CD8-positive, alpha-beta T cell (primary cell): ENCODE measurements at regions of chr4 and their contacts with region 1.

Region 1: DNA sequence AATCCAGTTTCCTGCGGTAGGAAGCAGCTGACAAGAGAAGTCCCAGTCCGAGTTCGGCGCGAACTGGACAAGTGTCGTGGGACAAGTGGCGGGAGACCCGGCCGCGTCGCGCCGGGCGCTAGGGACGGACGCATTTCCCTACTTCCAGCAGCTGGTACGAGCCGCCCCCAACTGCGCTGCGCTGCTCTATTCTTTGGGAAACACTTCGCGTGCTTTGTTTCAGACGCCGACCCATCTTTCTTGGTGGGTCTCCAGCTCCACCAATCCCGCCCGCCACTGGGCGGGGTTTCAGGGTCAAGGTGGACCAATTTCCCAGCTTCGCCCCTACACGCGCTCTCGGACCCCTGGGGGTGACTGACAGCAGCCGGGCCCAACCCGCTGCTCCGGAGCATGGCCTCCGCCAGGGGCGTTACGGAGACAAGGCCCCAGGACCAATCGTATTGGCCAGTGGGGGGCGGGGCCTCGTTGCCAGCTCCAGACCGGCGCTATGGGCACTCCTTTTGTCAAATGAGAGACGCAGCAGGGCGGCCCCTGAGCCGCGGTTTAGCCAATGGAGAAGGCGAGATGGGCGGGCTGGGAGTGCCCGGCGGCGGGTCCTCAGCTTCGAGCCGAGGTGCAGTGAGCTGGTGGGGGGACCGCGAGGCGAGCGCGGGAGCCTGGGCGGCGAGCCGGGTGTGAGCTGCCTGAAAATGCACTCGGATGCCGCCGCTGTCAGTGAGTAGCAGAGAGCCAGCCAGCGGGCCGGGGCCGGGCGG is at the start of gene DCUN1D4:
- DNase-seq: peak; percentile 96 to 99 (median 98)
- ATAC-seq: peak; percentile 81
- H3K4me3 ChIP-seq: peak within 1 kb of the TSS; percentile 73 to 97
- H3K4me3 Mint-ChIP-seq: peak within 1 kb of the TSS; percentile 95
- H3K27ac ChIP-seq: peak within 1 kb of the TSS; percentile 68 to 73
- H3K27ac Mint-ChIP-seq: peak within 1 kb of the TSS; percentile 92
- H3K4me1 ChIP-seq: peaks cover 4% of the 10 kb centered on the region
- H3K4me1 Mint-ChIP-seq: peaks cover 20% of the 10 kb centered on the region
- H3K27me3 ChIP-seq: no peaks in the 10 kb centered on the region
- H3K27me3 Mint-ChIP-seq: no peaks in the 10 kb centered on the region
- CTCF ChIP-seq: no peak
- total RNA-seq, gene DCUN1D4: 29.3 to 32.4 TPM

Region 2: GRCh38 chr4:51895813-51896408 is 53.2 kb after region 1 on chr4:
- CTCF ChIA-PET with region 1: interaction called, 5 read pairs
- POLR2A ChIA-PET with region 1: no interaction called
- intact Hi-C with region 1: loop called in 1 of 2 experiments (anchors 5 kb)
- DNase-seq: peak; percentile 1 to 70 (median 42)
- ATAC-seq: peak; percentile 80
- H3K4me3 ChIP-seq: no peak overlapping the region
- H3K4me3 Mint-ChIP-seq: no peak overlapping the region
- H3K27ac ChIP-seq: no peak overlapping the region
- H3K27ac Mint-ChIP-seq: no peak overlapping the region
- H3K4me1 ChIP-seq: no peaks in the 10 kb centered on the region
- H3K4me1 Mint-ChIP-seq: peaks cover 5% of the 10 kb centered on the region
- H3K27me3 ChIP-seq: no peaks in the 10 kb centered on the region
- H3K27me3 Mint-ChIP-seq: no peaks in the 10 kb centered on the region
- CTCF ChIP-seq: peak; percentile 67

Region 3: GRCh38 chr4:52659001-52659721 is 816.4 kb after region 1 on chr4 and contains the start of gene USP46:
- CTCF ChIA-PET with region 1: no interaction called
- POLR2A ChIA-PET with region 1: no interaction called
- intact Hi-C with region 1: loop called in 1 of 2 experiments (anchors 5 kb)
- DNase-seq: peak in 8 of 9 experiments; percentile 25 to 70 (median 42)
- ATAC-seq: peak; percentile 77
- H3K4me3 ChIP-seq: peak within 1 kb of the TSS; percentile 66 to 67
- H3K4me3 Mint-ChIP-seq: peak within 1 kb of the TSS; percentile 82
- H3K27ac ChIP-seq: peak within 1 kb of the TSS in 1 of 2 experiments; percentile 22
- H3K27ac Mint-ChIP-seq: peak within 1 kb of the TSS; percentile 76
- H3K4me1 ChIP-seq: no peaks in the 10 kb centered on the region
- H3K4me1 Mint-ChIP-seq: peaks cover 21% of the 10 kb centered on the region
- H3K27me3 ChIP-seq: no peaks in the 10 kb centered on the region
- H3K27me3 Mint-ChIP-seq: peaks cover 31% of the 10 kb centered on the region
- CTCF ChIP-seq: no peak
- total RNA-seq, gene USP46: 3.1 to 4.5 TPM

Region 4: DNA sequence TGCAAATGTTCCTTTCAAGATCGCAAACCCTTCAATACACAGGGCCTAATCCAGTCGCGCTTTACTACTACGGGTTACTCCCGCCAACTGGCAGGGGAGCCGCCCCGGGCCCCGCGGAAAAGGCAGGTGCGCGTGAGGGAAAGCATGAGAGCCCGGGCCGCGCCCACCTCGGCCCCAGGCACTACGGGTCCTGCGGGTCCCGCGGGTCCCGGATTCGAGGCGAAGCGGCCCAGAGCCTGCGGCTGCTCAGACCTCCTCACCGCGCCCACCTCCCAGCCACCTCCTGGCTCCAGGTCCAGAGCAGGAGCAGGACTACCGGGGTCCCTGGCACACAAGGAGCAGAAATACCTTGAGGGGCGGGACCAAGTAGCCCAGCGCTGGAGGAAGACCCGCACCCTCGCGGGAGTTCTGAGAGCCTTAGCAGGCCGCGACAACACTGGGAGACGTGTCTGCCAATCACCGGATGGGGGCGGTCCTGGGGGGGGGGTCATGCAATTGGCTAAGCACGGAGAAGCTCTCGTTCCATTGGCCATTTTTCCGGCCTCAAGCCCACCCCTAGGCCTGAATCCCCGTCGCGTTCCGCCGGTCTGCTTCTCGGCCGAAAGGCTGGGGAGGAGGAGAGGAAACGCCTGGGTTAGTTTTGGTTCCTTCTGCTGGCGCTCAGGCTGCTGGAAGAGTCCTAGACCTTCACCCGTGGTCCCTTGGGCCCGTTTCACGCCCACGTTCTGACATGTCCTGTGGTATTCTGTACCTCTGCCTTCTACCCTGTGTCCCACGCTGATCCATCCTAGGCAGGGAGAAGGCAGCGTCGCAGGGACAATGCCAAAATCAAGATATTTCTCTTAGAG is 879.5 kb after region 1 on chr4:
- CTCF ChIA-PET with region 1: no interaction called
- POLR2A ChIA-PET with region 1: interaction called, 4 read pairs
- intact Hi-C with region 1: loop called (anchors 1 to 5 kb)
- DNase-seq: peak; percentile 74 to 97 (median 89)
- ATAC-seq: peak; percentile 97
- H3K4me3 ChIP-seq: peak overlapping the region; percentile 76 to 87
- H3K4me3 Mint-ChIP-seq: peak overlapping the region; percentile 85
- H3K27ac ChIP-seq: peak overlapping the region; percentile 67 to 90
- H3K27ac Mint-ChIP-seq: peak overlapping the region; percentile 90
- H3K4me1 ChIP-seq: peaks cover 9% of the 10 kb centered on the region
- H3K4me1 Mint-ChIP-seq: peaks cover 11% of the 10 kb centered on the region
- H3K27me3 ChIP-seq: no peaks in the 10 kb centered on the region
- H3K27me3 Mint-ChIP-seq: peaks cover 5% of the 10 kb centered on the region
- CTCF ChIP-seq: no peak

Region 5: DNA sequence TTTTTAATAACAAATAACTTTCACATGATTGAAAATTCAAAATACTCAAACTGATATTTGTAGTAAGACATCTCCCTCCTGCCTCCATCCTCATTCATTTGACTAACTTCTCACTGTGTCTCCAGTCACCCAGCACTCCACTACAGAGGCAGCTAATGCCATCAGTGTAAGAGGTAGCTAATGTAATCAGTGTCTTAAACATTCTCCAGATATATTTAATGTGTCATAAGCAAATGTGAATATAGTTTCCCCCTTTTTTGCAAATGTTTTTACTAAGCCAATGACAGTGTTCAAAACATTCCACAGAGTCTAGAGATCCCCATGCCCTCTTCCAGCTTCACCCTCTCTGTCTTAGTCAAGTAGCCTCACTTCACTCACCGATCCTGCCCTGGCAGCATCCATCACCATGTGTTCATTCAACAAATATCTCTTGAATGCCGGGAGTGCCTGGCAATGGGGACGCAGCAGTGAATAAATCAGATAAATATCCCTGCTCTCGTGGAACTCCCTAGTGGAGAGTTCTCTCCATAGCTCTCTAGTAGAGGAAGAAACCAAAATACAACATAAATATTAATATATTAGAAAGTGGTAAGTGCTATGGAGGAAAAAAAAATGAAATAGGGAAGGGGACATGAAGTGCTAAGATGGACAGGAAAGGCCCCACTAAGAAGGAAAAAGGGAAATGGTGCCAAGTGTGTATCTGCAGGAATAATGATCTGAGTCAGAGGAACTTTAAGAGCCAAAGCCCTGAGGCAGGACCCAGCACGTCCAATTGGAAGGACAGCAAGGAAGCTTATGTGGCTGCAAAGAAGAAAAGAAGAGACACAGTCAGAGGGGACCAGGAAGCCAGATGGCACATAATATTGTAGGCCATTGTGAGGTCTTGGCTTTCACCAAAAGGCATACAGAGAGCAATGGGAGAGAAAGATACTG is 1504.5 kb after region 1 on chr4:
- CTCF ChIA-PET with region 1: no interaction called
- POLR2A ChIA-PET with region 1: no interaction called
- intact Hi-C with region 1: no loop called
- DNase-seq: no peak
- ATAC-seq: no peak
- H3K4me3 ChIP-seq: no peak overlapping the region
- H3K4me3 Mint-ChIP-seq: no peak overlapping the region
- H3K27ac ChIP-seq: no peak overlapping the region
- H3K27ac Mint-ChIP-seq: no peak overlapping the region
- H3K4me1 ChIP-seq: no peaks in the 10 kb centered on the region
- H3K4me1 Mint-ChIP-seq: peaks cover 13% of the 10 kb centered on the region
- H3K27me3 ChIP-seq: no peaks in the 10 kb centered on the region
- H3K27me3 Mint-ChIP-seq: no peaks in the 10 kb centered on the region
- CTCF ChIP-seq: no peak

Region 6: GRCh38 chr4:53377319-53378170 is 1534.8 kb after region 1 on chr4 and contains the start of gene FIP1L1:
- CTCF ChIA-PET with region 1: no interaction called
- POLR2A ChIA-PET with region 1: no interaction called
- intact Hi-C with region 1: loop called in 1 of 2 experiments (anchors 5 kb)
- DNase-seq: peak; percentile 90 to 98 (median 96)
- ATAC-seq: peak; percentile 92
- H3K4me3 ChIP-seq: peak within 1 kb of the TSS; percentile 68 to 96
- H3K4me3 Mint-ChIP-seq: peak within 1 kb of the TSS; percentile 100
- H3K27ac ChIP-seq: peak within 1 kb of the TSS; percentile 84 to 90
- H3K27ac Mint-ChIP-seq: peak within 1 kb of the TSS; percentile 99
- H3K4me1 ChIP-seq: peaks cover 26% of the 10 kb centered on the region
- H3K4me1 Mint-ChIP-seq: peaks cover 40% of the 10 kb centered on the region
- H3K27me3 ChIP-seq: peaks cover 0 to 2% of the 10 kb centered on the region in 2 experiments
- H3K27me3 Mint-ChIP-seq: peaks cover 2% of the 10 kb centered on the region
- CTCF ChIP-seq: no peak
- total RNA-seq, gene FIP1L1: 56.9 to 59.9 TPM